Activated CD8-positive, alpha-beta T cell treated with anti-CD3 and anti-CD28 coated beads for 36 hours (primary cell): ENCODE measurements at regions of chr10 and their contacts with region 1.

Region 1: DNA sequence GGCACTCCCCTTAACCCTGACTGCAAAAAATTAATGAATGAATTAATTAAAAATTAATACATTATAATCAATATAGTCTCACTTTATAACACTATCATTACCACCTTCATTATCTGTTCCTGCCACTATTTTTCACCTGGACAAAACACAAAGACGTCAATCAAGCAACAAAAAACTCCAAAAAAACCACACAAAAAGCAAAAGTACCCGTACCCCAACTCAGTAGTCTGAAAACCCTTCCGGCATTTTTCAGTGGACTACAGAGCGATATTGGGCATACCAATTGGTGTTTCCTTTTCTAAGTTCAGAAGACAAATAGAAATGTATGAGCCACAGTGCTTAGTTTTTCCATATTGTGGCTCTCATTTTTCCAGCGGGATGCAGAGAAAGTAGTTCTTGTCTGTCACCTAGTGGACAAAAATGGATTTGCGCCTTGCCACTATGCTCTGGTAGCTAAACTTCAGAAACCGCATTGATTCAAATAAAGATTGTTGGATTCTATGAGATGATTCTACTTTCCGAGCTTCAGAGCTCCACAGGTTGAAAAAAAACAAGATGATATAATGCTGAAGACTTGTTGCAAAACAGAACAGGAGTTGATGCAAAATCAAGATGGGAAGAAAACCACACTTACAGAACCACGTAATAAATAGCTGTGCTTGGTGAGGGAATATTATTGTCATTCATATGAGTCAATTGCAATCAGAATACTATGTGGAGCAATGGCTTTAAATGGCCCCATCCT is 50.6 kb upstream of the ITGB1 start:
- DNase-seq: peak; percentile 75
- ATAC-seq: peak; percentile 65
- H3K4me3 Mint-ChIP-seq: peak overlapping the region; percentile 59
- H3K27ac Mint-ChIP-seq: peak overlapping the region; percentile 68
- H3K4me1 Mint-ChIP-seq: peaks cover 27% of the 10 kb centered on the region
- H3K27me3 Mint-ChIP-seq: peaks cover 15% of the 10 kb centered on the region
- CTCF ChIP-seq: peak; percentile 99

Region 2: GRCh38 chr10:32378363-32379317 is 630.0 kb before region 1 on chr10:
- CTCF ChIA-PET with region 1: interaction called, 7 read pairs
- POLR2A ChIA-PET with region 1: no interaction called
- intact Hi-C with region 1: loop called (anchors 10 kb)
- DNase-seq: peak; percentile 98
- ATAC-seq: peak; percentile 95
- H3K4me3 Mint-ChIP-seq: no peak overlapping the region
- H3K27ac Mint-ChIP-seq: no peak overlapping the region
- H3K4me1 Mint-ChIP-seq: peaks cover 21% of the 10 kb centered on the region
- H3K27me3 Mint-ChIP-seq: no peaks in the 10 kb centered on the region
- CTCF ChIP-seq: no peak

Region 3: GRCh38 chr10:32795598-32796183 is 213.0 kb before region 1 on chr10:
- CTCF ChIA-PET with region 1: interaction called, 7 read pairs
- POLR2A ChIA-PET with region 1: no interaction called
- intact Hi-C with region 1: loop called (anchors 1 kb)
- DNase-seq: peak; percentile 3
- ATAC-seq: no peak
- H3K4me3 Mint-ChIP-seq: no peak overlapping the region
- H3K27ac Mint-ChIP-seq: no peak overlapping the region
- H3K4me1 Mint-ChIP-seq: no peaks in the 10 kb centered on the region
- H3K27me3 Mint-ChIP-seq: no peaks in the 10 kb centered on the region
- CTCF ChIP-seq: peak; percentile 63

Region 4: GRCh38 chr10:32980558-32981468 is 27.9 kb before region 1 on chr10:
- CTCF ChIA-PET with region 1: interaction called, 13 read pairs
- POLR2A ChIA-PET with region 1: no interaction called
- intact Hi-C with region 1: no loop called
- DNase-seq: peak; percentile 91
- ATAC-seq: peak; percentile 97
- H3K4me3 Mint-ChIP-seq: peak overlapping the region; percentile 79
- H3K27ac Mint-ChIP-seq: peak overlapping the region; percentile 90
- H3K4me1 Mint-ChIP-seq: peaks cover 27% of the 10 kb centered on the region
- H3K27me3 Mint-ChIP-seq: no peaks in the 10 kb centered on the region
- CTCF ChIP-seq: no peak

Region 5: GRCh38 chr10:33032654-33033151 is 24.0 kb after region 1 on chr10:
- CTCF ChIA-PET with region 1: interaction called, 11 read pairs
- POLR2A ChIA-PET with region 1: no interaction called
- intact Hi-C with region 1: no loop called
- DNase-seq: no peak
- ATAC-seq: no peak
- H3K4me3 Mint-ChIP-seq: no peak overlapping the region
- H3K27ac Mint-ChIP-seq: no peak overlapping the region
- H3K4me1 Mint-ChIP-seq: peaks cover 9% of the 10 kb centered on the region
- H3K27me3 Mint-ChIP-seq: no peaks in the 10 kb centered on the region
- CTCF ChIP-seq: no peak

Region 6: GRCh38 chr10:33106767-33107166 is 98.1 kb after region 1 on chr10:
- CTCF ChIA-PET with region 1: no interaction called
- POLR2A ChIA-PET with region 1: no interaction called
- intact Hi-C with region 1: no loop called
- DNase-seq: no peak
- ATAC-seq: no peak
- H3K4me3 Mint-ChIP-seq: no peak overlapping the region
- H3K27ac Mint-ChIP-seq: no peak overlapping the region
- H3K4me1 Mint-ChIP-seq: peaks cover 25% of the 10 kb centered on the region
- H3K27me3 Mint-ChIP-seq: peaks cover 16% of the 10 kb centered on the region
- CTCF ChIP-seq: no peak

Region 7: DNA sequence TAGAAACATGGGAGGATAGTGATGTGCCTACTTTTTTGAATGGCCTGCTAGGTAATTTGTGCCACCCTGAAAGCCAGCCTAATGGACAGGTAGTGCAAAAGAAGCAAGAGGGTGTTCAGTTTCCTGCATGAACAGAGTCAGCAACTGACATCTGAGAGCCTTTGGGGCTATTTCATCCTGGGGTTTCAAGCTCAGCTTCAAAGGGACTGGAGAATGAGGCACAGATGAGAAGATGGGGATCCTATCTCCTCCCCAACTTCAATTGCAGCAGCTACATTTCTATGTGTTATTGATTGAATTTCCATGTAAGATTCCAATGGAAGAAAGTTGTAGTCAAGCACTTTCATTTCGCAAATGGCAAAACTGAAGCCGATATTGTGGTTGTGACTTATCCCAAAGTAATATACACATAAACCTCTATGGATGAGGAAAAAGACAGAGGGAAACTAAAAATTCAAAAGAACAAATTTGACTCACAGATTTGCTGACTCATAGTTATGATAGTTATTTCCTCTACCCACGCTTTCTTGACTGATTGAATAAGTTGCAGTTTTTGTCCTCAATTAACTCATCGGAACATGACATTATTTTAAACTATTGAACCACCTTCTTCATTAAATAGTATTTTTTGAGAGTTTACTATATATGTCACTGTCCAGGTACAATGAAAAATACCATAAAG is 368.4 kb after region 1 on chr10:
- CTCF ChIA-PET with region 1: no interaction called
- POLR2A ChIA-PET with region 1: no interaction called
- intact Hi-C with region 1: no loop called
- DNase-seq: no peak
- ATAC-seq: peak; percentile 60
- H3K4me3 Mint-ChIP-seq: no peak overlapping the region
- H3K27ac Mint-ChIP-seq: peak overlapping the region; percentile 32
- H3K4me1 Mint-ChIP-seq: peaks cover 20% of the 10 kb centered on the region
- H3K27me3 Mint-ChIP-seq: peaks cover 20% of the 10 kb centered on the region
- CTCF ChIP-seq: no peak

Region 8: DNA sequence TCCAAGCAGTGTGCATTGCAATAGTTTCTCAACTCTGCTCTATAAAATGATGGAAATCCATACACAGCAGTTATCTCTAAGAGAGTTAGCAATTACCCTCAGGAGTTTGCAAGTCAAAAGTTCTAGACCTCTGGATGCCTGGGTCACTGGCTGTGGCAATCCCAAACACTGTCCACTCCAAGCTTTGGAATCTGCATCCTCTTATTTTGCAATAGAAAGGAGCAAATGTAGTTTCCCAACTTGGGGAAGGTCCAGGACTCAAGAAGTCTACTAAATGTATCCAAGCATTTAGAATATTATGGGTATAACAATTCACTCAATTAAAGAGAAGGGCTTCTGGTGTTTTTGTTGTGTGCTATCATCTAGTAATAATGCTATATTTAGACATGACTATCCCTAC is 457.1 kb after region 1 on chr10:
- CTCF ChIA-PET with region 1: no interaction called
- POLR2A ChIA-PET with region 1: no interaction called
- intact Hi-C with region 1: no loop called
- DNase-seq: no peak
- ATAC-seq: no peak
- H3K4me3 Mint-ChIP-seq: no peak overlapping the region
- H3K27ac Mint-ChIP-seq: no peak overlapping the region
- H3K4me1 Mint-ChIP-seq: no peaks in the 10 kb centered on the region
- H3K27me3 Mint-ChIP-seq: peaks cover 2% of the 10 kb centered on the region
- CTCF ChIP-seq: no peak